ENCODE measurements at regions of chr16 and their contacts with region 1.

Region 1: GRCh38 chr16:89507834-89508590 is at the start of gene SPG7:
- DNase-seq: peak; percentile 77
- H3K4me3 ChIP-seq: peak within 1 kb of the TSS; percentile 85 to 98
- H3K27ac ChIP-seq: peak within 1 kb of the TSS; percentile 86 to 88
- H3K4me1 ChIP-seq: peaks cover 6% of the 10 kb centered on the region
- H3K27me3 ChIP-seq: no peaks in the 10 kb centered on the region
- CTCF ChIP-seq: peak in 1 of 4 experiments; percentile 20
- POLR2A ChIP-seq: peak; percentile 95
- total RNA-seq, gene SPG7: 128 to 165 TPM

Region 2: GRCh38 chr16:89104930-89105571 is 403.0 kb before region 1 on chr16:
- intact Hi-C with region 1: no loop called
- DNase-seq: no peak
- H3K4me3 ChIP-seq: no peak overlapping the region
- H3K27ac ChIP-seq: no peak overlapping the region
- H3K4me1 ChIP-seq: no peaks in the 10 kb centered on the region
- H3K27me3 ChIP-seq: no peaks in the 10 kb centered on the region
- CTCF ChIP-seq: no peak
- POLR2A ChIP-seq: no peak

Region 3: DNA sequence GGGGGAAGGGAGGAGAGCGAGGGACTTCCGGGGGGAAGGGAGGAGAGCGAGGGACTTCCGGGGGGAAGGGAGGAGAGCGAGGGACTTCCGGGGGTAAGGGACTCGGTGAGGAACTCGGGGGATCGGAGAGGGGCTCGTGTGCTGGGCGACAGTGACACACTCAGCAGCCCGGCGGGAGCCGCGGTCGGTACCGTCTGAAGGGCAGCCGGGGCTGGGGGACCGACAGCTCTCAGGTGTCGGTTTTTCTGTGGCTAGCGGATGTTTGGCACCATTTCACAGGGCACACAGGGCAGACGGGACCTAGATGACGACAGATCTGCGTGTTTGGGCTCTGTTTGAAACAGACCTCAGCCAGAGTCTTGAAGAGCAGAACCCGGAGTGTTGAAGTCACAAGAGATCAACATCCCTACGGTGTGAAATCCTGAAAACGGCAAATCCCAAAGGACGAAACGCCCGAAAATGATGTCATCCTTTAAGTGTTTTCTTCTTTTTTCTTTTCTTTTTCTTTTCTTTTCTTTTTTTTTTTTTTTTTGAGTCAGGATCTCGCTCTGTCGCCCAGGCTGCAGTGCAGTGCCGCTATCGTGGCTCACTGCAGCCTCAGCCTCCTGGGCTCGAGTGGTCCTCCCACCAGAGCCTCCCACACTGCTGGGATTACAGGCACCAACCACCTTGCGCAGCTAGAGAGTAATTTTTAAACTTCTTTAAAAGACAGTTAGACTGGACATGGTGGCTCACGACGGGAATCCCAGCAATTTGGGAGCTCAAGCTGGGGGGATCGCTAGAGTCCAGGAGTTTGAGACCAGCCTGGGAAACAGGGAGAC is 266.6 kb before region 1 on chr16:
- intact Hi-C with region 1: loop called (anchors 10 kb)
- DNase-seq: peak; percentile 46
- H3K4me3 ChIP-seq: peak overlapping the region; percentile 63 to 81
- H3K27ac ChIP-seq: peak overlapping the region; percentile 88 to 97
- H3K4me1 ChIP-seq: no peaks in the 10 kb centered on the region
- H3K27me3 ChIP-seq: no peaks in the 10 kb centered on the region
- CTCF ChIP-seq: no peak
- POLR2A ChIP-seq: peak; percentile 61

Region 4: GRCh38 chr16:89343501-89344457 is 164.2 kb before region 1 on chr16:
- intact Hi-C with region 1: loop called (anchors 5 kb)
- DNase-seq: no peak
- H3K4me3 ChIP-seq: no peak overlapping the region
- H3K27ac ChIP-seq: peak overlapping the region; percentile 73
- H3K4me1 ChIP-seq: peaks cover 20% of the 10 kb centered on the region
- H3K27me3 ChIP-seq: no peaks in the 10 kb centered on the region
- CTCF ChIP-seq: no peak
- POLR2A ChIP-seq: peak; percentile 14

Region 5: DNA sequence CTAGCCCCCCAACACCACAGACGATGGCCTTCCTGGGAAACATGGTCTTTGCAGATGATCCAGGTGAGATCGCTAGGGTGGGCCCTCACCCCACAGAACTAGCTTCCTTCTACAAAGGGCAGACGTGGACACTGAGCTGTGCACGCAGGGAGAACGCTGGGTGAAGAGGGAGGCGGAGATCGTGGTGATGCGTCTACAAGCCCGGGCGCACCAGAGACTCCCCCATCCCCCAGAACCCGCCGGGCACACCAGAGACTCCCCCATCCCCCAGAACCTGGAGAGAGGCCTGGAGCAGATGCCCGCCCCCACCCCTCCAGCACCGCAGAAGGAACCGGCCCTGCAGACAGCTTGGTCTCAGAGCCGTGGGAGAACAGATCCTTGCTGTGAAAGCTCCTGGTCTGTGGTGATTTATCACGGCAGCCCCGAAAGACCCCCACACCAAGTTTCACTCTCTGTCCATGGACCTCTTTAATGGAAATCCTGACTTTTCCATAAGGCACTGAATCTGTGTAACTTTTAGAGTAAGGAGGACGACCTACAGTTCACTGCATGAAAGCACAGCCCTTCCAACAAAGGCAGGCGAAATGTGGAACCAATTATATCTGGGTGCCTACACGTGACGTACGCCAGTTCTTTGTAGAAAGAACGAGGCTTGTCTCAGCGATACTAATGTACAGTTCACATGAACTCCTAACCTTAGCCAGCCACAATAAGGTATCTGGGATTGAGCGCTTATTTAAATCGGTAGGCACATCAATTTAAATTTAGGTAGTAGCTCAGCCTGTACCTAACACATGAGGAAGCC is 106.2 kb before region 1 on chr16:
- intact Hi-C with region 1: no loop called
- DNase-seq: no peak
- H3K4me3 ChIP-seq: no peak overlapping the region
- H3K27ac ChIP-seq: no peak overlapping the region
- H3K4me1 ChIP-seq: no peaks in the 10 kb centered on the region
- H3K27me3 ChIP-seq: no peaks in the 10 kb centered on the region
- CTCF ChIP-seq: no peak
- POLR2A ChIP-seq: no peak

Region 6: GRCh38 chr16:89442990-89443731 is 64.9 kb before region 1 on chr16:
- intact Hi-C with region 1: loop called (anchors 5 kb)
- DNase-seq: peak; percentile 77
- H3K4me3 ChIP-seq: no peak overlapping the region
- H3K27ac ChIP-seq: peak overlapping the region; percentile 0 to 55
- H3K4me1 ChIP-seq: peaks cover 32% of the 10 kb centered on the region
- H3K27me3 ChIP-seq: no peaks in the 10 kb centered on the region
- CTCF ChIP-seq: no peak
- POLR2A ChIP-seq: no peak

Region 7: GRCh38 chr16:89490387-89491237 is 17.4 kb before region 1 on chr16 and contains the start of gene ANKRD11:
- intact Hi-C with region 1: loop called (anchors 2 kb)
- DNase-seq: peak; percentile 99
- H3K4me3 ChIP-seq: peak within 1 kb of the TSS; percentile 93 to 94
- H3K27ac ChIP-seq: peak within 1 kb of the TSS; percentile 92 to 93
- H3K4me1 ChIP-seq: peaks cover 12% of the 10 kb centered on the region
- H3K27me3 ChIP-seq: no peaks in the 10 kb centered on the region
- CTCF ChIP-seq: peak in 2 of 4 experiments; percentile 24
- POLR2A ChIP-seq: peak; percentile 91
- total RNA-seq, gene ANKRD11: 66.2 to 143 TPM